Activated CD4-positive, alpha-beta T cell treated with anti-CD3 and anti-CD28 coated beads, Interleukin-2, amount 10 ng/mL, durations not matched to agents 24 days and 14 days (primary cell): ENCODE measurements at regions of chr7 and their contacts with region 1.

Region 1: GRCh38 chr7:130961128-130961601 is 227.2 kb upstream of the KLF14 start:
- DNase-seq: peak; percentile 96
- H3K4me3 Mint-ChIP-seq: peak overlapping the region; percentile 88
- H3K27ac Mint-ChIP-seq: peak overlapping the region; percentile 97
- H3K4me1 Mint-ChIP-seq: peaks cover 36% of the 10 kb centered on the region
- H3K27me3 Mint-ChIP-seq: no peaks in the 10 kb centered on the region

Region 2: GRCh38 chr7:130896898-130897514 is 64.2 kb before region 1 on chr7:
- intact Hi-C with region 1: loop called (anchors 1 kb)
- DNase-seq: peak; percentile 91
- H3K4me3 Mint-ChIP-seq: peak overlapping the region; percentile 48
- H3K27ac Mint-ChIP-seq: peak overlapping the region; percentile 95
- H3K4me1 Mint-ChIP-seq: peaks cover 82% of the 10 kb centered on the region
- H3K27me3 Mint-ChIP-seq: no peaks in the 10 kb centered on the region

Region 3: GRCh38 chr7:130947792-130948580 is 13.2 kb before region 1 on chr7:
- intact Hi-C with region 1: loop called (anchors 1 kb)
- DNase-seq: peak; percentile 80
- H3K4me3 Mint-ChIP-seq: peak overlapping the region; percentile 69
- H3K27ac Mint-ChIP-seq: peak overlapping the region; percentile 83
- H3K4me1 Mint-ChIP-seq: peaks cover 52% of the 10 kb centered on the region
- H3K27me3 Mint-ChIP-seq: no peaks in the 10 kb centered on the region

Region 4: DNA sequence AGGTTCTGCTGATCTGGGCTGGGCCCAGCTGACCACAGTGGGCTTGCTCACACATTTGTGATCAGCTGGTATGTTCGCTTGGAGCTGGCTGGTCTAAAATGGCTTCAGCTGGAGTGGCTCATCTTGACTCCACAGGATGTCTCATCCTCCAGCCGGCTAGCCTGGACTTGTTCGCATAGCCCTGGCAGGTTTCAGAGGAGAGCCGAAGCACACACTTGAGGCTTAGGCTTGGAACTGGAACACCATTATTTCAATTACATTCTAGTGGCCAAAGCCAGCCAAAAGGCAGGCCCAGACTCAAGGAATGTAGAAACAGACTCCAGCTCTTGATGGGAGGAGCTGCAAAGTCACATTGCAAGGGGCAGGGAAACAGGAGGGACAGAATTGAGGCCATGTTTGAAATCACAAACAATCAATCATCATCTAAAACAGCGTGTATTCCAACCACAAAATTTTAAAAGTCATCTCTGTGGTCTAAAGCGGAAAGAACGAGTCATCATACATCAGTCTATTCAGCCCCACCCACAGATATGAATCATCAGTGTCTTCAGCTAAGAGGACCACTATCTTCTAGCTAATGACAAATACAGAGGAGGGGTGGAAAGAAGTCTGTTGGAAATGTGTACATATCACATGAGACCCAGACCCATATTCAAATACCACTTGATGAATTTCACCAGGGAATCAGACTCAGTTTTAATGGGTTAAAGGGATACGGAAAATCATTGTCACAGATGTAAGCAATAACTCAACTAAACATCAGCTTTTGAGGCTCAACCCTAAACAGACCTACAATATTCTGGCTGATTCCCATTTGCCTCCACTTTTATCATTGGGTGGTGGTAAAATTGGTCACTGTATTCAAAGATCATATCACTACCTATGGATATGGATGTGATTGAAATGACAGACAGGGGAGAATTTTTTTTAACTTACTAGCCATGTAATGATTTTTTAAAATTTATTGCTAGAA is 227.5 kb after region 1 on chr7:
- intact Hi-C with region 1: loop called (anchors 5 kb)
- DNase-seq: peak; percentile 89
- H3K4me3 Mint-ChIP-seq: peak overlapping the region; percentile 38
- H3K27ac Mint-ChIP-seq: peak overlapping the region; percentile 90
- H3K4me1 Mint-ChIP-seq: peaks cover 47% of the 10 kb centered on the region
- H3K27me3 Mint-ChIP-seq: no peaks in the 10 kb centered on the region

Region 5: GRCh38 chr7:131327626-131328376 is 366.6 kb after region 1 on chr7 and contains the start of gene MKLN1:
- intact Hi-C with region 1: loop called (anchors 5 kb)
- DNase-seq: peak; percentile 97
- H3K4me3 Mint-ChIP-seq: peak within 1 kb of the TSS; percentile 99
- H3K27ac Mint-ChIP-seq: peak within 1 kb of the TSS; percentile 97
- H3K4me1 Mint-ChIP-seq: peaks cover 45% of the 10 kb centered on the region
- H3K27me3 Mint-ChIP-seq: no peaks in the 10 kb centered on the region
- total RNA-seq, gene MKLN1: 38.3 and 38.8 TPM in 2 replicates